Ascending aorta (tissue), 2 donors: ENCODE measurements at regions of chr3 and their contacts with region 1.

Region 1: DNA sequence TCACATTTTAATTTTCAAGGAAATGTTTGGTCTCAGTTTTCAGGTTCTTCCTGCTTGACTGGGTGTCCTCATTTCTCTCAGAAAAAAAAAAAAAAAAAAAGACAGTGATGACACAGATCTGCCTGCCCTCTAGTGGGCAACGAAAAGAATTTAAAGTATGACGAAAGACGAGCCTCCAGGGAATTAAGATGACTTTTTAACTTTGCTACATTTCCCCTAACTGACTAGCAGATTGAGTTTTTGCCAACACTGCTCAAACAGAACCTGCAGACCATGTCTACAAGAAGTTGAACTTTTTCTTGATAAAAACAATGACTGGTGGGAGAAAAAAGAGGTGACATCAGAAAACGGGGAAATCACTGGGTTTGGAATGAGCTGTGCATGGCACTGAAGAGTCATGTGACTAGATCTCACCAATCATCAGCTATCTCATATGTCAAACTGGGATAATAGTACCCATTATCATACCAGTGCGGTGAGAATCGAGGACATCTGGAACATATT is 40.8 kb downstream of the EOMES start:
- DNase-seq: no peak
- H3K4me3 ChIP-seq: no peak overlapping the region
- H3K27ac ChIP-seq: peak overlapping the region; percentile 33 to 64
- H3K4me1 ChIP-seq: peaks cover 3 to 15% of the 10 kb centered on the region in 2 donors
- H3K27me3 ChIP-seq: no peaks in the 10 kb centered on the region
- CTCF ChIP-seq: peak; percentile 48 to 65 (median 58)

Region 2: DNA sequence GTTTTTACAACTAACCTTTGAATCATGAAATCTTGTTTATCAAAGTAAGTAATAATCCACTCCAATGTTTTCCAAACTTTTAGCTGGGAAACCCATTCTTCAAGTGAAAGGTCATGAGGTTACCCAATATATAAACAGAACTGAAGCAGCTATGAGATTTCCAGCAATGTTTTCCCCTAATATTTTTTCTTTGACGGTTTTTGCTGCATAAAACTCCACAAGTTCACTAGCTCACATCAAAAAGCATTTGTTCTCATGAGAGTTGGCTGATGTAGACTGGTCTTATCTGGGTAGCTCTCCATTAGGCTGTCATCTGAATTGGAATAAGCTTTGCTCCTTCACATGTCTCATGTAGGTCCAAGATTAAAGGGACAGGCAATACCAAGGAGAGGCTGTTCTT is 1299.9 kb before region 1 on chr3:
- intact Hi-C with region 1: no loop called
- DNase-seq: no peak
- H3K4me3 ChIP-seq: no peak overlapping the region
- H3K27ac ChIP-seq: no peak overlapping the region
- H3K4me1 ChIP-seq: no peaks in the 10 kb centered on the region
- H3K27me3 ChIP-seq: no peaks in the 10 kb centered on the region
- CTCF ChIP-seq: no peak

Region 3: GRCh38 chr3:27010834-27011233 is 670.5 kb before region 1 on chr3:
- intact Hi-C with region 1: no loop called
- DNase-seq: no peak
- H3K4me3 ChIP-seq: no peak overlapping the region
- H3K27ac ChIP-seq: no peak overlapping the region
- H3K4me1 ChIP-seq: no peaks in the 10 kb centered on the region
- H3K27me3 ChIP-seq: no peaks in the 10 kb centered on the region
- CTCF ChIP-seq: no peak

Region 4: GRCh38 chr3:27134165-27134796 is 547.0 kb before region 1 on chr3:
- intact Hi-C with region 1: loop called (anchors 5 kb)
- DNase-seq: peak in 1 of 2 donors; percentile 68
- H3K4me3 ChIP-seq: no peak overlapping the region
- H3K27ac ChIP-seq: no peak overlapping the region
- H3K4me1 ChIP-seq: no peaks in the 10 kb centered on the region
- H3K27me3 ChIP-seq: no peaks in the 10 kb centered on the region
- CTCF ChIP-seq: peak; percentile 66 to 89 (median 70)

Region 5: DNA sequence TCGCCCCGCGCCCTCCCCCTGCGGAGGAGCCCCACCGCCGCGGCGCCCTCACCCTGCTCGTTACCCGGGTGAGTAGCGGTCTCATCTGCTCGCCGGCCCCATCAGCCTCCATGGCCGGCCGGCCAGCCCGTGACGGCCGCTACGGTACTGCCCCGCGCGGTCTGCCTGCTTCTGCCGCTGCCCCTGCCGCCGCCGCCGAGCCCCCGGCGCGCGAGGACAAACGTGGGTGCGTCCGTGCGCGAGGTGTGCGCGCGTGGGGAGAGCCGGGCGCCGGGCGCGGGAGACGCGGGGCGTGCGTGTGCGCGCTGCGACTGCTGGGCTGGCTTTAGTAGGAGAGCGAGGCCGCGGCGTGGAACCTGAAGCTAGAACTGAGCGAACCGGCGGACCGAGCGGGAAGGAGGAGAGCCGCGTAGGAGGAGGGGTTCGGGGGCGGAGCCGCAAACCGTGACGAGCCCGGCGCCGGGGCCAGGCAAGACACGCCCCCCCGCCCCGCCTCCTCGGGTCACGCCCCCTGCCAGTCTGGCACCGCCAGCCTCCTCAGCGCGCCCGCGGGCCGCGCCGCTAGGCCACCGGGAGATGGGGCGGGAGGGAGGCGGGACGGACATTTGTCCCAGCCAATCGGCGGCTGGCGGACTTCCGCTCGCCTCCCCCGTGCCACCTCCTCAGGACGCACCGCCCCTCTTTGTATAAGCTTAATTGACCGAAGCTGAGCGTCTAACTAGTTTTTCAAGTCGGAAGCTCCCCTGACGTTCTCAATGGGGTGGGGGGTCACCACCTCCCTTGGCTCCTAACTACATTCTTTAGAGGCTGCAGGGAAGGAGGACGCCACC is 197.1 kb before region 1 on chr3 and contains the start of gene SLC4A7:
- intact Hi-C with region 1: loop called (anchors 1 kb)
- DNase-seq: peak; percentile 88 to 98
- H3K4me3 ChIP-seq: peak within 1 kb of the TSS; percentile 71 to 92
- H3K27ac ChIP-seq: peak within 1 kb of the TSS; percentile 92 to 99
- H3K4me1 ChIP-seq: peaks cover 3 to 19% of the 10 kb centered on the region in 2 donors
- H3K27me3 ChIP-seq: no peaks in the 10 kb centered on the region
- CTCF ChIP-seq: no peak
- total RNA-seq, gene SLC4A7: 11.0 TPM

Region 6: GRCh38 chr3:27533718-27534573 is 147.4 kb before region 1 on chr3:
- intact Hi-C with region 1: loop called (anchors 5 kb)
- DNase-seq: peak; percentile 68 to 95
- H3K4me3 ChIP-seq: no peak overlapping the region
- H3K27ac ChIP-seq: peak overlapping the region; percentile 83 to 86
- H3K4me1 ChIP-seq: peaks cover 0 to 26% of the 10 kb centered on the region in 2 donors
- H3K27me3 ChIP-seq: no peaks in the 10 kb centered on the region
- CTCF ChIP-seq: peak; percentile 46 to 68 (median 48)

Region 7: GRCh38 chr3:27632431-27633223 is 48.7 kb before region 1 on chr3:
- intact Hi-C with region 1: loop called (anchors 1 kb)
- DNase-seq: peak in 1 of 2 donors; percentile 78
- H3K4me3 ChIP-seq: peak overlapping the region; percentile 63 to 83
- H3K27ac ChIP-seq: peak overlapping the region; percentile 84 to 91
- H3K4me1 ChIP-seq: peaks cover 4 to 19% of the 10 kb centered on the region in 2 donors
- H3K27me3 ChIP-seq: no peaks in the 10 kb centered on the region
- CTCF ChIP-seq: no peak